H1 (cell line): ENCODE measurements at regions of chr3 and their contacts with region 1.

Region 1: GRCh38 chr3:16871915-16872842 is 12.6 kb upstream of the PLCL2 start:
- DNase-seq: no peak
- H3K4me3 ChIP-seq: no peak overlapping the region
- H3K27ac ChIP-seq: no peak overlapping the region
- H3K4me1 ChIP-seq: no peaks in the 10 kb centered on the region
- H3K27me3 ChIP-seq: no peaks in the 10 kb centered on the region
- CTCF ChIP-seq: peak in 1 of 3 experiments; percentile 22; a peak in 1 of 4 replicates
- EP300 ChIP-seq: no peak
- POLR2A ChIP-seq: no peak
- RAD21 ChIP-seq: peak in 1 of 2 experiments; percentile 16; a peak in 1 of 4 replicates

Region 2: GRCh38 chr3:16820485-16820884 is 51.7 kb before region 1 on chr3:
- CTCF ChIA-PET with region 1: no interaction called
- POLR2A ChIA-PET with region 1: no interaction called
- DNase-seq: no peak
- H3K4me3 ChIP-seq: no peak overlapping the region
- H3K27ac ChIP-seq: no peak overlapping the region
- H3K4me1 ChIP-seq: no peaks in the 10 kb centered on the region
- H3K27me3 ChIP-seq: no peaks in the 10 kb centered on the region
- CTCF ChIP-seq: no peak
- EP300 ChIP-seq: no peak
- POLR2A ChIP-seq: no peak
- RAD21 ChIP-seq: no peak

Region 3: DNA sequence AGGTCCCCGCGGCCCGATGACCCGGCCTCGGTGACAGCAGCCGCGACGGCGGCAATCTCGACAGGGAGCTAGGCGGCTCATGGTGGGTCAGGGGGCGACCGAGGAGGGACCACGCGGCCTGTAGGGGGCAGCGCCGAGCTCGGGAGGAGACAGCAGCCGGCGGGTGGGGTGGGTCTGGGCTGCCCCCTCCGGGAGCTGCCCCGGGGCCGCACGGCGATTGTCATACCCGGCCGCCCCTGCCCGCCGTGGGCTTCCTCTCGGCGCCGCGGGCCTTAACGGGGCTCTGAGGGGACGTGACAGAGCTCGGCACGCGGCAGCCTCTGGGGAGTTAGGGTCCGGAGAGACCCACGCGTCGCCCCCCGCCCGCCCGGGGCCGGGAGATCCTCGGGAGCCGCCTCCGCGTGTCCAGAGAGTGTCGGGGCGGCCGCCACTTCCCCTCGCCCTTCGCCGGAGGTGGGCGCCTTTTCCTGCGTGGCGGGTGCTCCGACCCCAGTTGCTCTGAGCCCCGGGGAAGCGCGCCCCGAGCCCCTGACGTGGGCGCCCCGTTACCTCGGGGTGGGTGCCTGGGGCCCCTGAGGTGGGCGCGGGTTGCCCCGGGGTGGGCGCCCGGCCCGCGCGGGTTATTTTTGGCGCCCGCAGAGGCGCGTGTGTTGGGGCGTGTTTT is 12.0 kb after region 1 on chr3:
- CTCF ChIA-PET with region 1: interaction called, 20 read pairs
- POLR2A ChIA-PET with region 1: interaction called, 5 read pairs
- DNase-seq: peak in 1 of 2 experiments; percentile 94
- H3K4me3 ChIP-seq: peak overlapping the region; percentile 59 to 85 (median 62)
- H3K27ac ChIP-seq: no peak overlapping the region
- H3K4me1 ChIP-seq: peaks cover 6 to 12% (median 7%) of the 10 kb centered on the region in 4 experiments
- H3K27me3 ChIP-seq: peaks cover 0 to 18% (median 13%) of the 10 kb centered on the region in 4 experiments; a peak in 6 of 7 replicates
- CTCF ChIP-seq: peak; percentile 79 to 88 (median 82)
- EP300 ChIP-seq: no peak
- POLR2A ChIP-seq: no peak
- RAD21 ChIP-seq: peak; percentile 65 to 78